CD8-positive, alpha-beta T cell (primary cell): ENCODE measurements at regions of chr3 and their contacts with region 1.

Region 1: DNA sequence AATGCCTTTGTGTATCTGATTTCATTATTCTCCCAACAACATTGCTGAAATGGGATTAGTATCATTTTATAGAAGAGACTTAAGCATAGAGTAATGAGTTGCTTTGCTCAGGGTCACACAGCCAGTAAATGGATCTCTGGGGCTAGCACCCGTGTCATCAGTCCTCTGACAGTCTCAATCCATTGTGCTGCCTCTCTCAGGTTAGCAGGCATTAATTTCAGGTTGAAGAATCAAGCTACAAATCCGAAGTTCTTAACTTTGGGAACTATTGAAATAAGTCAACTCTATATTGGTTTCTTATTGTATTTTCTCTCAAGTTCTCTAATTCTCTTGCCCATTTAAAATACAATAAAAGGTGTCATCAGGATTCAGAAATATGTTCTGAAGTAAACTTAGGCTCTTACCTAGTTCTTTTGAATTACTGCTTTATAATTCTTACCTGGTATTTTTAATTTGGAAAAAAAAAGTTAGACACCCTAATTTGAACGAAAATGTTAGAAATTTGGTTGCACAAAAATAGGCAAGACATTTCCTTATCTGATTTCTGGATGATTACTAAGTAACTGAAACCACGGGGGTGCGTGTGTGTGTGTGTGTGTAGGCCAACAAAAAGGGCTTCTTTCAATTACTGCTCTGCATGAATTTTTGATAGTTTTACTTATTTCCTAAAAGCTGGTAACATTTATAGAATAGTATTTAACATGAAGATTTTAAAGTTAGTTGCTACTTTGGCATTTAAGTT is 189.8 kb downstream of the MBNL1 start:
- DNase-seq: no peak
- ATAC-seq: no peak
- H3K4me3 ChIP-seq: no peak overlapping the region
- H3K4me3 Mint-ChIP-seq: no peak overlapping the region
- H3K27ac ChIP-seq: peak overlapping the region in 1 of 2 experiments; percentile 12
- H3K27ac Mint-ChIP-seq: peak overlapping the region; percentile 86
- H3K4me1 ChIP-seq: peaks cover 14% of the 10 kb centered on the region
- H3K4me1 Mint-ChIP-seq: peaks cover 44% of the 10 kb centered on the region
- H3K27me3 ChIP-seq: no peaks in the 10 kb centered on the region
- H3K27me3 Mint-ChIP-seq: no peaks in the 10 kb centered on the region
- CTCF ChIP-seq: no peak

Region 2: GRCh38 chr3:152307829-152308474 is 150.6 kb before region 1 on chr3:
- CTCF ChIA-PET with region 1: no interaction called
- POLR2A ChIA-PET with region 1: no interaction called
- intact Hi-C with region 1: no loop called
- DNase-seq: no peak
- ATAC-seq: no peak
- H3K4me3 ChIP-seq: no peak overlapping the region
- H3K4me3 Mint-ChIP-seq: peak overlapping the region; percentile 0
- H3K27ac ChIP-seq: peak overlapping the region in 1 of 2 experiments; percentile 56
- H3K27ac Mint-ChIP-seq: peak overlapping the region; percentile 71
- H3K4me1 ChIP-seq: peaks cover 75% of the 10 kb centered on the region
- H3K4me1 Mint-ChIP-seq: peaks cover 78% of the 10 kb centered on the region
- H3K27me3 ChIP-seq: no peaks in the 10 kb centered on the region
- H3K27me3 Mint-ChIP-seq: no peaks in the 10 kb centered on the region
- CTCF ChIP-seq: no peak

Region 3: DNA sequence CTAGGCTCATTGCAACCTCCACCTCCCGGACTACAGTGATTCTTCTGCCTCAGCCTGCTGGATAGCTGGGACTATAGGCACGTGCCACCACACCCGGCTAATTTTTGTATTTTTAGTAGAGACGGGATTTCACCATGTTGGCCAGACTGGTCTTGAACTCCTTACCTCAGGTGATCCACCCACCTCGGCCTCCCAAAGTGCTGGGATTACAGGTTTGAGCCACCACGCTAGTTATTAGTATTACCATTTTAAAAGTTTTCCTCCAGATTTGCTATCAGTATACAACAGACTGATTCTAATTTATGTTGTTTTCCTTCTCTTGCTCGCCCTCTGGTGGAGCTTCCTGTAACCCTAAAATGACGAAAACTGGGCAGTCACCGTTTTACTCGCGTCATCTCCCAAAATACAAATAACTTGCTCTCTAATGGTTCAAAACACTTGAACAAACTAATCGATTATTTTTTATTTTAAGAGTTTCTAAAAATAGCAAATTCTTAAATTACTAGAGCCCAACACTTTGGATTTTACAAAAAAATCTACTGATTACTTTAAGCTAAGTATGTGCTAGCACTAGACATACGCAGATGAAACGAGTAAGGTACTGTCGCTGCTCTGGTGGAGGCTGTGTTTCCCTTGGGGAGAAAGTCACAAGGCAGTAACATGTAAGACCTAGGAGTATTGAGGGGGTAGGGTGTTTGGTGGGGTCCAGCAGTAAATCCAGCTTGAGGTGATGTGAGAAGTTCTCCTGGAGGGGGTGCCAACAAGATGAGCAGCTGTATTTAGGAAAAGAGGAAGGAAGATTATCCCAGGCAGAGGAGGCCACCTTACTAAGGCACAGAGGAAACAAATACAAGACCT is 13.5 kb after region 1 on chr3:
- CTCF ChIA-PET with region 1: interaction called, 11 read pairs
- POLR2A ChIA-PET with region 1: interaction called, 3 read pairs
- intact Hi-C with region 1: no loop called
- DNase-seq: peak; percentile 48 to 85 (median 70)
- ATAC-seq: peak; percentile 90
- H3K4me3 ChIP-seq: peak overlapping the region; percentile 40
- H3K4me3 Mint-ChIP-seq: peak overlapping the region; percentile 77
- H3K27ac ChIP-seq: peak overlapping the region; percentile 11 to 59
- H3K27ac Mint-ChIP-seq: peak overlapping the region; percentile 94
- H3K4me1 ChIP-seq: peaks cover 12% of the 10 kb centered on the region
- H3K4me1 Mint-ChIP-seq: peaks cover 15% of the 10 kb centered on the region
- H3K27me3 ChIP-seq: no peaks in the 10 kb centered on the region
- H3K27me3 Mint-ChIP-seq: no peaks in the 10 kb centered on the region
- CTCF ChIP-seq: peak; percentile 84